Ascending aorta (tissue), 2 donors: ENCODE measurements at regions of chr19 and their contacts with region 1.

Region 1: GRCh38 chr19:44954824-44955586 is at the start of gene CLPTM1:
- DNase-seq: peak; percentile 87 to 98
- H3K4me3 ChIP-seq: peak within 1 kb of the TSS; percentile 73 to 98
- H3K27ac ChIP-seq: peak within 1 kb of the TSS; percentile 89 to 91
- H3K4me1 ChIP-seq: peaks cover 10 to 30% of the 10 kb centered on the region in 2 donors
- H3K27me3 ChIP-seq: no peaks in the 10 kb centered on the region
- CTCF ChIP-seq: peak in 1 of 3 experiments; percentile 28
- total RNA-seq, gene CLPTM1: 65.2 TPM

Region 2: DNA sequence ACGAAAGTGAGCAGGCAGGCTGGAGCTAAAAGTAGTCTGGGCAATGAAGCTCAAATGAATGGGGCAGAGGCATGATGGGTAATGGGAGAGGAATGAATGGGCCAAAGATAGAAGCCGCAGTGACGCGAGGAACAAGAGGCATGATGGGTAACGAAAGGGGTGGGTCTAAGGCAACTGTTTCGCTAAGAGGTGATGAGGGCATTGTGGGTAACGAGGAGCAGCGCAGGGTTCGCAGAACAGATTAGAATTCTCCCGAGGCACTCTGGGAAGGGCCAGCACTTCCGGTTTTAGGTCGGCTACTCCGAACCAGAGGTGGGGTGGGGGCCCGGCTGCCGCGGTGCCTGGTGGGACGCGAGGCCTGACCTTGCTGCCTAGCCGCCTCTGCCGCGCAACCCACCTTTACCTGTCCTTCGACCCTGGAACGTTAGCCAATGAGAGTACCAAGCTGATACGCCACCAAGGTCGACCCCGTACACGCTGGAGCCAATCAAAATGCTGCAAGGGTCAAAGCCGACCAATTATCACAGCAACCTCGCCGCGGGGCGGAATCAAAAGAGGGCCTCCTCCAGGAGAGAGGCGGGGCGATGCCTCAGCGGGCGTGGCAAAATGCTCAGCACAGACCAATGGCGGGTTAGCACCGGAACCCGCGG is 64.5 kb before region 1 on chr19:
- intact Hi-C with region 1: loop called (anchors 1 kb)
- DNase-seq: peak; percentile 100
- H3K4me3 ChIP-seq: peak overlapping the region; percentile 65 to 72
- H3K27ac ChIP-seq: peak overlapping the region; percentile 92 to 97
- H3K4me1 ChIP-seq: peaks cover 12 to 19% of the 10 kb centered on the region in 2 donors
- H3K27me3 ChIP-seq: no peaks in the 10 kb centered on the region
- CTCF ChIP-seq: no peak

Region 3: GRCh38 chr19:44903602-44904425 is 51.2 kb before region 1 on chr19:
- intact Hi-C with region 1: loop called (anchors 1 kb)
- DNase-seq: peak in 1 of 2 donors; percentile 88
- H3K4me3 ChIP-seq: no peak overlapping the region
- H3K27ac ChIP-seq: no peak overlapping the region
- H3K4me1 ChIP-seq: peaks cover 0 to 5% of the 10 kb centered on the region in 2 donors
- H3K27me3 ChIP-seq: peaks cover 3% of the 10 kb centered on the region
- CTCF ChIP-seq: peak; percentile 92 to 99 (median 95)

Region 4: GRCh38 chr19:44912854-44913253 is 42.2 kb before region 1 on chr19:
- intact Hi-C with region 1: loop called (anchors 1 kb)
- DNase-seq: peak in 1 of 2 donors; percentile 26
- H3K4me3 ChIP-seq: no peak overlapping the region
- H3K27ac ChIP-seq: no peak overlapping the region
- H3K4me1 ChIP-seq: no peaks in the 10 kb centered on the region
- H3K27me3 ChIP-seq: no peaks in the 10 kb centered on the region
- CTCF ChIP-seq: no peak

Region 5: GRCh38 chr19:45178262-45179071 is 223.5 kb after region 1 on chr19 and contains the start of gene BLOC1S3:
- intact Hi-C with region 1: loop called (anchors 5 kb)
- DNase-seq: peak; percentile 100
- H3K4me3 ChIP-seq: peak within 1 kb of the TSS; percentile 84 to 91
- H3K27ac ChIP-seq: peak within 1 kb of the TSS; percentile 96 to 99
- H3K4me1 ChIP-seq: peaks cover 3 to 24% of the 10 kb centered on the region in 2 donors
- H3K27me3 ChIP-seq: no peaks in the 10 kb centered on the region
- CTCF ChIP-seq: peak in 2 of 3 experiments; percentile 11 to 34
- total RNA-seq, gene BLOC1S3: 0.32 TPM